GM12878 (cell line): ENCODE measurements at regions of chr10 and their contacts with region 1.

Region 1: DNA sequence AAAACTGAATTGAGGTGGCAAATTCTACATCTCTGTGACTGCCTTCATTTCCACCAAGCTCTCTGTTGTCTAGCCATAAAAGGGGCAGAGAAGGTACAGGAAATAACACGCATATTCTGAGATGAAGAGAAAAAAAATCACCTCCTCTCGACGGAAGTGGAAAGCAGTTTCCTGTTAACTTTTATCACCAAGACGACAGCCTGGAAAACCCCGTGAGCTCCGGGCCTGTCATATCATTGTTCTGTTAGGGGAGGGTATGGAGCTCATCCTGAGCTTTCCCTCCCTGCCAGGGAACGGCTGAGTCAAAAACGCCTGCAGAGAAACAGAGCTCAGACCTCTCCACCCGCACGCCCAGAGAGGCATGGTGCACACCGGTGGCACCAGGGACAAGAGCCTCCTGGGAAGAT is 200.3 kb downstream of the PRPF18 start:
- DNase-seq: peak; percentile 73
- ATAC-seq: peak; percentile 85
- H3K4me3 ChIP-seq: no peak overlapping the region
- H3K27ac ChIP-seq: peak overlapping the region; percentile 78
- H3K4me1 ChIP-seq: peaks cover 18% of the 10 kb centered on the region
- H3K27me3 ChIP-seq: no peaks in the 10 kb centered on the region
- CTCF ChIP-seq: no peak
- EP300 ChIP-seq: peak in 1 of 2 experiments; percentile 64; a peak in 2 of 4 replicates
- POLR2A ChIP-seq: 0 out of 2 replicates have a peak, but pooled peaks have one; percentile 19
- RAD21 ChIP-seq: no peak

Region 2: GRCh38 chr10:13613519-13613918 is 173.5 kb before region 1 on chr10:
- CTCF ChIA-PET with region 1: interaction called, 10 read pairs
- POLR2A ChIA-PET with region 1: no interaction called
- RAD21 ChIA-PET with region 1: no interaction called
- SMC1A ChIA-PET with region 1: interaction called, 3 read pairs
- in situ Hi-C with region 1: no loop called
- intact Hi-C with region 1: no loop called
- DNase-seq: no peak
- ATAC-seq: peak; percentile 33; the same call in 2 of the 3 replicates
- H3K4me3 ChIP-seq: no peak overlapping the region
- H3K27ac ChIP-seq: no peak overlapping the region
- H3K4me1 ChIP-seq: no peaks in the 10 kb centered on the region
- H3K27me3 ChIP-seq: no peaks in the 10 kb centered on the region
- CTCF ChIP-seq: peak; percentile 7 to 25 (median 23); a peak in 2 of 6 replicates
- EP300 ChIP-seq: no peak
- POLR2A ChIP-seq: no peak
- RAD21 ChIP-seq: peak; percentile 42

Region 3: DNA sequence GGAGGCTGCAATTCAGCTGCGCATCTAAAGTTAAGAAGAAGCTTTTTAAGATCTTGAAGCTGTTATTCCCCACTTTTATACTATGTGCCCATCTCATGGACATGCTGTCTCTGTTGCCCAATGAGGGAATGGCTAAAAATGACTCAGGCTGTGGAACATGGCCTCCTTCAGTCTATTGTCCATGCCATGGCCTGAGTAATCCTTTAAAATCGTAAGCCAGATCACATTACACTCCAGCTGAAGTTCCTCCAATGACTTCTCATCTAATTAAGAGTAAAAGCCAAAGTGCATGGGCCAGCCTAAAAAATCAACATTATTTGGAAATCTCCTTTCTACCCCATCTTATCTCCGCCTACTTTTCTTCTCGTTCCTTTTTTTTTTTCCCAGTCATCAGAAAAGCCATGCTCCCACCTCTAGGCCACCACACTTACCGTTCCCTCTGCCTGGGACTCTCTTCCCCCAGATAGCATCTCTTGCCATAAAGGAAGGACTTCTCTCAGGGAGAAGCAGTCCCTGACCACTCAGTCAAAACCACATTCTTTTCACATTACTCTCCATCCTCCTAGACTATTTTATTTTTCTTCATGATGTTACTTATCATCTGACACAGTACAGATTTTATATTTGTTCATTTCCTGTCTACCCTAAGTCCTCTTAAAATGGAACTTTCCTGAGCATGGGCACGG is 137.2 kb after region 1 on chr10:
- CTCF ChIA-PET with region 1: no interaction called
- POLR2A ChIA-PET with region 1: no interaction called
- RAD21 ChIA-PET with region 1: interaction called, 7 read pairs
- SMC1A ChIA-PET with region 1: interaction called, 7 read pairs
- in situ Hi-C with region 1: no loop called
- intact Hi-C with region 1: loop called (anchors 5 kb)
- DNase-seq: no peak
- ATAC-seq: no peak
- H3K4me3 ChIP-seq: no peak overlapping the region
- H3K27ac ChIP-seq: no peak overlapping the region
- H3K4me1 ChIP-seq: peaks cover 22% of the 10 kb centered on the region
- H3K27me3 ChIP-seq: no peaks in the 10 kb centered on the region
- CTCF ChIP-seq: no peak
- EP300 ChIP-seq: no peak
- POLR2A ChIP-seq: no peak
- RAD21 ChIP-seq: no peak

Region 4: DNA sequence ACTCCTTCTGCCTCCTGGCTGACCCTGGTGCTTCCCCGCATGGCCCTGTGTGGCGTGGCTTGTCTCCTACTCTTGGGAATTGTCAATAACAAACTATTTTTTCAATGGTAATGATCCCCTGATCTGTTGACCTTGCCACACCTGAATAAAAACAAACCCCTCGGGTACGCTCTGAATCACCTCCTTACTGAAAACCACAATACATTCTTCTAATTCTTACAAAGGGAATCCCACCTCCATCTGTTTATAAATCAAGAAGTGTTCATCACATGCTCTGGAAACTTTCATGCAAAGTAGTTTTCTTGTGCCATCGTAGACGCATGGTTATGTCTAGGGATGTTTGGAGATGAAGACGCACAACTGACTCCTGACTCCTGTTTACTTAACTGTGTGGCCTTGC is 297.9 kb after region 1 on chr10:
- CTCF ChIA-PET with region 1: interaction called, 16 read pairs
- POLR2A ChIA-PET with region 1: no interaction called
- RAD21 ChIA-PET with region 1: interaction called, 13 read pairs
- SMC1A ChIA-PET with region 1: interaction called, 4 read pairs
- in situ Hi-C with region 1: loop called (anchors 5 kb)
- intact Hi-C with region 1: no loop called
- DNase-seq: no peak
- ATAC-seq: no peak
- H3K4me3 ChIP-seq: no peak overlapping the region
- H3K27ac ChIP-seq: no peak overlapping the region
- H3K4me1 ChIP-seq: no peaks in the 10 kb centered on the region
- H3K27me3 ChIP-seq: no peaks in the 10 kb centered on the region
- CTCF ChIP-seq: no peak
- EP300 ChIP-seq: no peak
- POLR2A ChIP-seq: no peak
- RAD21 ChIP-seq: no peak

Region 5: GRCh38 chr10:14185316-14186045 is 398.5 kb after region 1 on chr10:
- CTCF ChIA-PET with region 1: interaction called, 8 read pairs
- POLR2A ChIA-PET with region 1: interaction called, 5 read pairs
- RAD21 ChIA-PET with region 1: interaction called, 15 read pairs
- SMC1A ChIA-PET with region 1: interaction called, 5 read pairs
- in situ Hi-C with region 1: no loop called
- intact Hi-C with region 1: loop called (anchors 2 kb)
- DNase-seq: peak; percentile 86
- ATAC-seq: peak; percentile 94
- H3K4me3 ChIP-seq: 0 out of 2 replicates have a peak overlapping the region, but pooled peaks have one; percentile 63
- H3K27ac ChIP-seq: peak overlapping the region; percentile 75
- H3K4me1 ChIP-seq: peaks cover 10% of the 10 kb centered on the region
- H3K27me3 ChIP-seq: peaks cover 0 to 3% of the 10 kb centered on the region in 2 experiments; a peak in 2 of 4 replicates
- CTCF ChIP-seq: peak in 2 of 3 experiments; percentile 13 to 27; a peak in 3 of 6 replicates
- EP300 ChIP-seq: no peak
- POLR2A ChIP-seq: peak; percentile 99
- RAD21 ChIP-seq: no peak

Region 6: GRCh38 chr10:14491806-14492205 is 704.8 kb after region 1 on chr10:
- CTCF ChIA-PET with region 1: no interaction called
- POLR2A ChIA-PET with region 1: no interaction called
- RAD21 ChIA-PET with region 1: no interaction called
- SMC1A ChIA-PET with region 1: no interaction called
- in situ Hi-C with region 1: no loop called
- intact Hi-C with region 1: loop called (anchors 10 kb)
- DNase-seq: no peak
- ATAC-seq: no peak
- H3K4me3 ChIP-seq: no peak overlapping the region
- H3K27ac ChIP-seq: no peak overlapping the region
- H3K4me1 ChIP-seq: no peaks in the 10 kb centered on the region
- H3K27me3 ChIP-seq: peaks cover 0 to 2% of the 10 kb centered on the region in 2 experiments; a peak in 2 of 4 replicates
- CTCF ChIP-seq: no peak
- EP300 ChIP-seq: no peak
- POLR2A ChIP-seq: no peak
- RAD21 ChIP-seq: no peak

Region 7: DNA sequence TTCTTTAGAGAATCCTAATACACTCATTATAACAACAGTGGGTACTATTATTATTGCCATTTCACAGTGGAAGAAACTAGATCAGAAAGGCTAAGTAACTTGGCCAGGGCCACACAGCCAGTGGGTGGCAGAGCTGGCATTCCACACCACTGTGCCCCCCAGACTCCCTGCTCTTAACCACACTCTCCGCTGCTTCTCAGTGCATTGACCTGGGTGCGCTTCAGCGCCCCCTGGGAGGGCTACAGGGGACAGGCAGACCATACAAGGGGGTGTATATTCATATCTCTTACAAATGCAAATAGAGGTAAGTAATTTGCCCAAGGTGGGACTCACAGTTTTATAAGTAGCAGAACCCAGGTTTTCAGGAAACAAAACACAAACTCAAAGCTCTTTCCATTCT is 1458.5 kb after region 1 on chr10:
- CTCF ChIA-PET with region 1: no interaction called
- POLR2A ChIA-PET with region 1: no interaction called
- RAD21 ChIA-PET with region 1: no interaction called
- SMC1A ChIA-PET with region 1: no interaction called
- in situ Hi-C with region 1: no loop called
- intact Hi-C with region 1: no loop called
- DNase-seq: no peak
- ATAC-seq: peak; percentile 74
- H3K4me3 ChIP-seq: no peak overlapping the region
- H3K27ac ChIP-seq: no peak overlapping the region
- H3K4me1 ChIP-seq: no peaks in the 10 kb centered on the region
- H3K27me3 ChIP-seq: no peaks in the 10 kb centered on the region
- CTCF ChIP-seq: peak; percentile 31 to 58 (median 48)
- EP300 ChIP-seq: no peak
- POLR2A ChIP-seq: no peak
- RAD21 ChIP-seq: peak; percentile 48; the same call in 1 of the 2 replicates